SK-N-SH (cell line): ENCODE measurements at regions of chr19 and their contacts with region 1.

Region 1: GRCh38 chr19:32971715-32972540 is at the starts of genes CEP89 and FAAP24:
- DNase-seq: peak; percentile 97
- H3K4me3 ChIP-seq: peak within 1 kb of the TSS; percentile 49 to 88
- H3K27ac ChIP-seq: peak within 1 kb of the TSS; percentile 50 to 51; a peak in 2 of 4 replicates
- H3K4me1 ChIP-seq: peaks cover 0 to 10% of the 10 kb centered on the region in 2 experiments; a peak in 1 of 4 replicates
- H3K27me3 ChIP-seq: no peaks in the 10 kb centered on the region
- CTCF ChIP-seq: no peak
- EP300 ChIP-seq: no peak
- RAD21 ChIP-seq: no peak
- polyA plus RNA-seq, gene CEP89: 15.7 and 16.4 TPM in 2 replicates
- polyA plus RNA-seq, gene FAAP24: 3.3 and 3.9 TPM in 2 replicates

Region 2: DNA sequence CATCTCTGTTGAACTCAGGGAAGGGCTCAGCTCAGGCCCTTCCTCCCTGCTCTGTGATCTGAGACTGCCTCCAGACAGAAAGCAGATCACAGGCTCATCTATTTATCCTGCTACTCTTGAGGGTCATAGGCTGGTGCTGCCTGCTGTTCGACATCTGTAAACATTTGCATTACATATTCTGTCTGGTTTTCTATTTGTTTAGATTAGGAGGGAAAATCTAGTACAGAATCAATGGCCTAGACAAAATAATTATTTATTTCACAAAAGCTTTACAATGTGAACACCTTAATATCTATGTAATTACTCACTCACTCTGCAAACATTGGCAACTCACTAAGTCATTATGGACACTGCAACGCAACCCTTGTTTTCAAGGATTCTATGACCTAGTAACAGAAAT is 43.1 kb before region 1 on chr19:
- CTCF ChIA-PET with region 1: no interaction called
- POLR2A ChIA-PET with region 1: no interaction called
- DNase-seq: no peak
- H3K4me3 ChIP-seq: no peak overlapping the region
- H3K27ac ChIP-seq: no peak overlapping the region
- H3K4me1 ChIP-seq: no peaks in the 10 kb centered on the region
- H3K27me3 ChIP-seq: no peaks in the 10 kb centered on the region
- CTCF ChIP-seq: no peak
- EP300 ChIP-seq: no peak
- RAD21 ChIP-seq: no peak

Region 3: GRCh38 chr19:32988724-32989123 is 16.8 kb after region 1 on chr19:
- CTCF ChIA-PET with region 1: interaction called, 12 read pairs
- POLR2A ChIA-PET with region 1: no interaction called
- DNase-seq: no peak
- H3K4me3 ChIP-seq: no peak overlapping the region
- H3K27ac ChIP-seq: no peak overlapping the region
- H3K4me1 ChIP-seq: no peaks in the 10 kb centered on the region
- H3K27me3 ChIP-seq: no peaks in the 10 kb centered on the region
- CTCF ChIP-seq: no peak
- EP300 ChIP-seq: no peak
- RAD21 ChIP-seq: no peak

Region 4: GRCh38 chr19:33080761-33081681 is 109.1 kb after region 1 on chr19 and contains the start of gene GPATCH1:
- CTCF ChIA-PET with region 1: interaction called, 14 read pairs
- POLR2A ChIA-PET with region 1: no interaction called
- DNase-seq: peak; percentile 96
- H3K4me3 ChIP-seq: peak within 1 kb of the TSS; percentile 76 to 92
- H3K27ac ChIP-seq: peak within 1 kb of the TSS; percentile 54 to 81; a peak in 3 of 4 replicates
- H3K4me1 ChIP-seq: peaks cover 8 to 11% of the 10 kb centered on the region in 2 experiments; a peak in 2 of 4 replicates
- H3K27me3 ChIP-seq: no peaks in the 10 kb centered on the region
- CTCF ChIP-seq: no peak
- EP300 ChIP-seq: no peak; a peak in 1 of 4 replicates
- RAD21 ChIP-seq: no peak
- polyA plus RNA-seq, gene GPATCH1: 5.9 and 6.3 TPM in 2 replicates

Region 5: GRCh38 chr19:33104520-33104919 is 132.6 kb after region 1 on chr19:
- CTCF ChIA-PET with region 1: interaction called, 215 read pairs
- POLR2A ChIA-PET with region 1: no interaction called
- DNase-seq: no peak
- H3K4me3 ChIP-seq: no peak overlapping the region
- H3K27ac ChIP-seq: no peak overlapping the region
- H3K4me1 ChIP-seq: peaks cover 0 to under 1% of the 10 kb centered on the region in 2 experiments; a peak in 1 of 4 replicates
- H3K27me3 ChIP-seq: no peaks in the 10 kb centered on the region
- CTCF ChIP-seq: no peak
- EP300 ChIP-seq: no peak
- RAD21 ChIP-seq: no peak